Activated CD4-positive, alpha-beta T cell treated with anti-CD3 and anti-CD28 coated beads for 36 hours (primary cell): ENCODE measurements at regions of chr6 and their contacts with region 1.

Region 1: DNA sequence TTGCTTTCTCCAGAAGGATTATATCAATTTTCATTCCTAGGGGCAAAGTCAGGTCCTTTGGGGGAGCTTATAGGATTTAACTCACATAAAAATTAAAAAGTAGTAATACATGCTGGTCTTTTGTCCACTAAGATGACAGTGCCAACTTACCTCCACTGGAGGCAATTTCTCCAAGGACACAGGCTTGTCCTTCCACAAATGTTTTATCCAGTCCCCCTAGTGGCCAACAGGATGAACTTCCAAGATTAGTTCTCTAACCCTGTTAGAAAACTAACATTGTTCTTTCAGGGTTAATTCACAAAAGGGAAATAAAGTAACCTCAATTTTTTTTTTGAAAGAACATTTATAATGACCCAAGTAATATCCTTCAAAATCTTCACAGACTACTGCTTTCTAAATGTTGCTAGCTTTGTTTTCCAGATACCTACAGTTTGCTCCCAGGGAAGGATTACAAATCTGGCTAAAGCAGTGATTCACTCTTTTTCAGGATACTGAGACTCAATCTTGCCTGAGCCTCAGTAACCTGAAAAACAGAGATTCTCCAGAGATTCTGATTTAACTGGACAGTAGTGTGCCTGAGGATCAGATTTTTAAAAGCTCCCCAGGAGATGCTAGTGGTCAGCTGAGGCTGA is 31.7 kb upstream of the UBR2 start:
- DNase-seq: peak; percentile 31
- ATAC-seq: peak; percentile 65
- H3K4me3 Mint-ChIP-seq: no peak overlapping the region
- H3K27ac Mint-ChIP-seq: no peak overlapping the region
- H3K4me1 Mint-ChIP-seq: no peaks in the 10 kb centered on the region
- H3K27me3 Mint-ChIP-seq: peaks cover 2% of the 10 kb centered on the region

Region 2: GRCh38 chr6:42260972-42261371 is 271.2 kb before region 1 on chr6:
- CTCF ChIA-PET with region 1: interaction called, 4 read pairs
- POLR2A ChIA-PET with region 1: no interaction called
- intact Hi-C with region 1: loop called (anchors 2 to 5 kb)
- DNase-seq: peak; percentile 65
- ATAC-seq: peak; percentile 74
- H3K4me3 Mint-ChIP-seq: no peak overlapping the region
- H3K27ac Mint-ChIP-seq: peak overlapping the region; percentile 40
- H3K4me1 Mint-ChIP-seq: no peaks in the 10 kb centered on the region
- H3K27me3 Mint-ChIP-seq: no peaks in the 10 kb centered on the region

Region 3: GRCh38 chr6:42511803-42512422 is 20.2 kb before region 1 on chr6:
- CTCF ChIA-PET with region 1: interaction called, 15 read pairs
- POLR2A ChIA-PET with region 1: no interaction called
- intact Hi-C with region 1: no loop called
- DNase-seq: no peak
- ATAC-seq: no peak
- H3K4me3 Mint-ChIP-seq: no peak overlapping the region
- H3K27ac Mint-ChIP-seq: no peak overlapping the region
- H3K4me1 Mint-ChIP-seq: peaks cover 17% of the 10 kb centered on the region
- H3K27me3 Mint-ChIP-seq: no peaks in the 10 kb centered on the region

Region 4: GRCh38 chr6:42520786-42521607 is 11.2 kb before region 1 on chr6:
- CTCF ChIA-PET with region 1: interaction called, 13 read pairs
- POLR2A ChIA-PET with region 1: no interaction called
- intact Hi-C with region 1: no loop called
- DNase-seq: peak; percentile 49
- ATAC-seq: peak; percentile 97
- H3K4me3 Mint-ChIP-seq: no peak overlapping the region
- H3K27ac Mint-ChIP-seq: peak overlapping the region; percentile 76
- H3K4me1 Mint-ChIP-seq: peaks cover 24% of the 10 kb centered on the region
- H3K27me3 Mint-ChIP-seq: no peaks in the 10 kb centered on the region